H1 (cell line): ENCODE measurements at regions of chr12 and their contacts with region 1.

Region 1: GRCh38 chr12:76158518-76159321 is 74.2 kb upstream of the NAP1L1 start:
- DNase-seq: peak; percentile 21 to 73
- H3K4me3 ChIP-seq: no peak overlapping the region
- H3K27ac ChIP-seq: no peak overlapping the region
- H3K4me1 ChIP-seq: peaks cover 0 to 6% (median 2%) of the 10 kb centered on the region in 4 experiments; a peak in 1 of 7 replicates
- H3K27me3 ChIP-seq: no peaks in the 10 kb centered on the region
- CTCF ChIP-seq: peak; percentile 73 to 97 (median 80)
- EP300 ChIP-seq: no peak
- POLR2A ChIP-seq: no peak
- RAD21 ChIP-seq: peak; percentile 72 to 83

Region 2: DNA sequence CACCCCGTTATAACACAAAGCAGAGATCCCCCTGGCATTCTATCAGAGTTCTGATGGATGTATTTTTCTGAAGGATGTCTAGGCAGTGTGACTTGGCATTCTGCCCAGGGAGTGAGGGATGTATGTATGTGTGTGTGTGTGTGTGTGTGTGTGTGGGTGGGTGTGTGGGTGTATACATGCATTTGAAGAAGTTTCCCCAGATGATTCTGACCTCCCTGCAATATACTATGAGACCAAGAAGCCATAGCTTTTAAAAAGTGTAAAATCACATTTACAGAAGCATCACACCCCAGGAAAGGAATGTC is 14.5 kb before region 1 on chr12:
- CTCF ChIA-PET with region 1: interaction called, 15 read pairs
- POLR2A ChIA-PET with region 1: interaction called, 3 read pairs
- DNase-seq: no peak
- H3K4me3 ChIP-seq: no peak overlapping the region
- H3K27ac ChIP-seq: no peak overlapping the region
- H3K4me1 ChIP-seq: no peaks in the 10 kb centered on the region
- H3K27me3 ChIP-seq: no peaks in the 10 kb centered on the region
- CTCF ChIP-seq: no peak
- EP300 ChIP-seq: no peak
- POLR2A ChIP-seq: no peak
- RAD21 ChIP-seq: no peak

Region 3: GRCh38 chr12:76173756-76174155 is 15.0 kb after region 1 on chr12:
- CTCF ChIA-PET with region 1: interaction called, 21 read pairs
- POLR2A ChIA-PET with region 1: interaction called, 3 read pairs
- DNase-seq: no peak
- H3K4me3 ChIP-seq: no peak overlapping the region
- H3K27ac ChIP-seq: no peak overlapping the region
- H3K4me1 ChIP-seq: no peaks in the 10 kb centered on the region
- H3K27me3 ChIP-seq: no peaks in the 10 kb centered on the region
- CTCF ChIP-seq: no peak
- EP300 ChIP-seq: no peak
- POLR2A ChIP-seq: no peak
- RAD21 ChIP-seq: no peak

Region 4: DNA sequence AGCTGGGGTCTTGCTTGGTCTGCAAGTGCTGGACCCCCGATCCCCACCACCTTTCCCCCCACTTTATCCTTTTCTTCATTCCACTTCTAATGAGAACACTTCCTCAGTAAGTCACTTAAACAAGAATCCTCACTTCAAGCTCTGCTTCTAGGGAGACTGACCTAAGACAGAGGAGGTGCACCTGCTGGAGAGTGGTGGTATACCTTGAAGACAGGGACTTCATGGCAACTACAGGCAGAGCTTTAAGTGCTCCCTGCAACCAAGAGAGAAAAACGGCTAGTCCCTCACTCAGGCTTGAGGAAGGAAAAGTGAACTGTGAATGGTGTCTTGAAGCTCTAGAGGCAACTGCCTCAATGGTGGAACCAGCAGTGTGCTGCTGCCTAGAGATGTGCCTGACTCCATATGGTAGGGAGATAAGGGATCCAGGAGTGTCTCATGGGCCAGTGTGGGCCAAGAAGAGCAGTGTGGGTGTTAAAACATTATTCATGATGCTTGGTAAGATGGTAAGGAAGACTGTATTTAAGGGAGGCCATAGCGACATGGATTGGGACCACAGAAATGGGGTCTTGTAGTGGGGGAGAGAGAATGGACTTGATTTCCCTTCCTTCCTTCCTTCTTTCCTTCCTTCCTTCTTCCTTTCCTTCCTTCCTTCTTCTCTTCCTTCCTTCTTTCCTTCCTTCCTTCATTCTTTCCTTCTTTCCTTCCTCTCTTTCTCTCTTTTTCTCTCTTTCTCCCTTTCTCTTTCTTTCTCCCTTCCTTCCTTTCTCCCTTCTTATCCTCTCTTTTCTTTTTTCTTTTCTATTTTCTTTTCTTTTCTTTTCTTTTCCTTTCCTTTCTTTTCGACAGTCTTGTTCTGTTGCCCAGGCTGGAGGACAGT is 21.9 kb after region 1 on chr12:
- CTCF ChIA-PET with region 1: interaction called, 14 read pairs
- POLR2A ChIA-PET with region 1: no interaction called
- DNase-seq: no peak
- H3K4me3 ChIP-seq: no peak overlapping the region
- H3K27ac ChIP-seq: no peak overlapping the region
- H3K4me1 ChIP-seq: no peaks in the 10 kb centered on the region
- H3K27me3 ChIP-seq: no peaks in the 10 kb centered on the region
- CTCF ChIP-seq: peak in 1 of 3 experiments; percentile 19; a peak in 1 of 4 replicates
- EP300 ChIP-seq: no peak
- POLR2A ChIP-seq: no peak
- RAD21 ChIP-seq: peak in 1 of 2 experiments; percentile 18; a peak in 1 of 4 replicates